CD8-positive, alpha-beta memory T cell (primary cell): ENCODE measurements at regions of chr12 and their contacts with region 1.

Region 1: GRCh38 chr12:96720364-96720702 is 186.7 kb upstream of the NEDD1 start:
- DNase-seq: peak in 2 of 5 donors; percentile 3 to 20
- H3K4me3 ChIP-seq: peak overlapping the region; percentile 78
- H3K4me3 Mint-ChIP-seq: peak overlapping the region; percentile 88 to 95 (median 91)
- H3K27ac ChIP-seq: peak overlapping the region; percentile 15
- H3K27ac Mint-ChIP-seq: peak overlapping the region; percentile 91 to 98 (median 94)
- H3K4me1 ChIP-seq: peaks cover 6% of the 10 kb centered on the region
- H3K4me1 Mint-ChIP-seq: peaks cover 8 to 23% (median 9%) of the 10 kb centered on the region in 3 donors
- H3K27me3 ChIP-seq: no peaks in the 10 kb centered on the region
- H3K27me3 Mint-ChIP-seq: no peaks in the 10 kb centered on the region

Region 2: GRCh38 chr12:96194971-96195844 is 525.1 kb before region 1 on chr12:
- CTCF ChIA-PET with region 1: no interaction called
- POLR2A ChIA-PET with region 1: interaction called, 12 read pairs
- DNase-seq: peak; percentile 61 to 85 (median 75)
- H3K4me3 ChIP-seq: peak overlapping the region; percentile 97
- H3K4me3 Mint-ChIP-seq: peak overlapping the region; percentile 88 to 99 (median 98)
- H3K27ac ChIP-seq: peak overlapping the region; percentile 86
- H3K27ac Mint-ChIP-seq: peak overlapping the region; percentile 90 to 100 (median 98)
- H3K4me1 ChIP-seq: peaks cover 34% of the 10 kb centered on the region
- H3K4me1 Mint-ChIP-seq: peaks cover 43 to 64% (median 45%) of the 10 kb centered on the region in 3 donors
- H3K27me3 ChIP-seq: no peaks in the 10 kb centered on the region
- H3K27me3 Mint-ChIP-seq: peaks cover 0 to 3% of the 10 kb centered on the region in 2 donors